Right ventricle myocardium inferior (tissue), 1 donor: ENCODE measurements at regions of chr3 and their contacts with region 1.

Region 1: DNA sequence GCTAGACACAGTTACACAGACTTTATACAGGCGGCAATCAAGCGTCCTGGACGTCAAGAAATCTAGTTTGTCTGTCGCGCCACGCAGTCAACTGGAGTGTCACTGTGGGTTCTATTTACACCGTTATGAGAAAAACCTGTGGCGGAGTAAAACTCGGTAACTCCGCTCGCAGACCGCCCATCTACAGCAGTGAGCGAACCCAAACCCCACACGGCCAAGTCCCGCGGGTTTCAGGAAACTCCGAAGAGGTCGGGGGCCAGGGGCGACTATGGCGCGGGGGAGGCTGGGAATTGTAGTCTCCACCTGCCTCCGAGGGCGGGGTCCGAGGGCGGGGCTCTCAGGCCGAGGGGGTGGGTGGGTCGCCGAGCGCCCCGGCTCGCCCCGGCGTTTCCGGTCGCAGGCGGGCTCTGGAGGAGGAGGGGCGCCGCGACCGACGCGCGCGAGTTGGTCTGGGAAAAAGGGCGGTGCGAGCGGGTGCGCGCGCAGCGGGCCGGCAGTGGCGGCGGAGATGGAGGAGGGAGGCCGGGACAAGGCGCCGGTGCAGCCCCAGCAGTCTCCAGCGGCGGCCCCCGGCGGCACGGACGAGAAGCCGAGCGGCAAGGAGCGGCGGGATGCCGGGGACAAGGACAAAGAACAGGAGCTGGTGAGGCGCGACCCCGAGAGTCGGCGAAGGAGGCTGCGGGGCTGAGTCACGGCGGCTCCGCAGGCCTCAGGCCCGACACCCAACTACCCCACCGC is at the start of gene PSMD2:
- DNase-seq: peak; percentile 99
- ATAC-seq: peak; percentile 99
- total RNA-seq, gene PSMD2: 228 TPM

Region 2: DNA sequence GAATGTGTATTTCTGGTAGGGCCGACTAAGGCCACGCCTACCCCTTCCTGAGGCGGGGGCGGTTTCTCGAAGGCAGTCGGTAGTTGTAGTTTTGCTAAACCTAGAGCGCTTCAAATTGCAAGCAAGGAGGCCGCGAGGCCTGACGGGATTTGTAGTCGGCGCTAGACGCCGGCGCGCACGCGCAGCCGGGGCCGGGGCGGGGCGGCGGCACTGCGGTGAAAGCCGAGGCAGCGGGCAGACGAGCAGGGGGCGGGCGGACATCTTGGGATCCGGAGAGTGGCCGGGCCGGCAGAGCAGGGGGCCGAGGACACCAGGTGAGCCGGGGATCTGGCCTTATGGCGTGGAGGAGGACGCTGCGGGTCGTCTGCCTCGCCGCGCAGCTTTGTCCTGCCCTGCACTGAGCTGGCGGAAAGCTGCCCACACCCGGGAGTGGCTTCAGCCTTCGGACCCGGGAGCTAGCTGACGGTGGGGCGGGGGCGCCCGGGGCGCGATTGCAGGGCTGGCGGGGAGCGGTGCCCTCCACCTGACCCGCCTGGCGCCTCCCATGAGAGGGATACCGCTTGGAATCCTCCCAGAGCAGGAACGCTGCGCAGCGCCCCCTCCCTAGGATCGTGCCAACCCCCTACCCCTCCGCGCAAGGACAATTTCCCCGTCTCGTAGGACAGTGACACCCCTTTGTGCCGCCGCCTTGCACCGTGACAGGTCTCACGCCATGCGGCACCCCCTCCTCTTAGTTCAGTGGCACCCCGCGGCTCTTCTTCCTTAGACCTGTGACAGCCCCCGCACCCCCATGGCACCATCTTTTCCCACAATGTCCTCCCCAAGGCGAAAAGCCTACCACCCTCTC is 124.1 kb before region 1 on chr3 and contains the start of gene AP2M1:
- intact Hi-C with region 1: no loop called
- DNase-seq: peak; percentile 99
- ATAC-seq: peak; percentile 95
- total RNA-seq, gene AP2M1: 269 TPM

Region 3: DNA sequence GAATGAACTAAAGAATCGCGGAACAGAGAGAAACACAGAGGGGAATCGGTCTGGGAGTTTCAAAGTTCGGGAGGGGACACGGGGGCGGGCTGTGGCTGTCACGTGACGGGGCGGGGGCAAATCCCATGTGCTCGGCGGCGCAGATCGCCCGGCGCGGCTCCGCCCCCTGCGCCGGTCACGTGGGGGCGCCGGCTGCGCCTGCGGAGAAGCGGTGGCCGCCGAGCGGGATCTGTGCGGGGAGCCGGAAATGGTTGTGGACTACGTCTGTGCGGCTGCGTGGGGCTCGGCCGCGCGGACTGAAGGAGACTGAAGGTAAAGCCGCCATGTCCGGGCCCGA is 15.4 kb after region 1 on chr3 and contains the start of gene EIF4G1:
- intact Hi-C with region 1: loop called (anchors 1 kb)
- DNase-seq: peak; percentile 98
- ATAC-seq: peak; percentile 94
- total RNA-seq, gene EIF4G1: 274 TPM

Region 4: DNA sequence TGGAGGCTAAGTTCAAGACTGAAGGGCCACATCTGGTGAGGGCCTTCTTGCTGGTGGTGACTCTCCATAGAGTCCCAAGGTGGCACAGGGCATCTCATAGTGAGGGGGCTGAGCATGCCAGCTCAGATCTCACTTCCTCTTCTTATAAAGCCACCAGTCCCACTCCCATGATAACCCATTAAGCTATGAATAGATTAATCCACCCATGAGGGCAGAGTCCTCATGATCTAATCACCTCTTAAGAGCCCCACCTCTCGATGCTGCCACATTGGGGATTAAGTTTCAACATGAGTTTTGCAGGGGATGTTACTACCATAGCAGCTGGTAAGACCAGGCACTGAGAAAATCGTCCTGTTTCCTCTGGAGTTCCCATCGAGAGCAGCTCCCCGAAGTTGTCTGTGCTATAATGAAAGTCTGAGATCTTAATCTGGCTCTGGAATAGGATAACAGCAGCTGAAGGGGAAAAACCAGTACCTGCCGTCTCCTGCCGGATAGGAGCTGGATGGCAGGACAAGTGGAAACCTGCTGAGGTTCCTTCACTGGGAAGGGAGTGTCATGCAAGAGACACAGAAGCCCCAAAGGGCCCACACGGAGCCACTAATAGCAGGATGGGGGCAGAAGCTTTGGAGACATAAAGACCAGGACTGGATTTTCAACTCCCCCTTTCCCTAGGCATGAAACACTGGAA is 183.2 kb after region 1 on chr3:
- intact Hi-C with region 1: no loop called
- DNase-seq: no peak
- ATAC-seq: no peak